ENCODE measurements at regions of chr1 and their contacts with region 1.

Region 1: DNA sequence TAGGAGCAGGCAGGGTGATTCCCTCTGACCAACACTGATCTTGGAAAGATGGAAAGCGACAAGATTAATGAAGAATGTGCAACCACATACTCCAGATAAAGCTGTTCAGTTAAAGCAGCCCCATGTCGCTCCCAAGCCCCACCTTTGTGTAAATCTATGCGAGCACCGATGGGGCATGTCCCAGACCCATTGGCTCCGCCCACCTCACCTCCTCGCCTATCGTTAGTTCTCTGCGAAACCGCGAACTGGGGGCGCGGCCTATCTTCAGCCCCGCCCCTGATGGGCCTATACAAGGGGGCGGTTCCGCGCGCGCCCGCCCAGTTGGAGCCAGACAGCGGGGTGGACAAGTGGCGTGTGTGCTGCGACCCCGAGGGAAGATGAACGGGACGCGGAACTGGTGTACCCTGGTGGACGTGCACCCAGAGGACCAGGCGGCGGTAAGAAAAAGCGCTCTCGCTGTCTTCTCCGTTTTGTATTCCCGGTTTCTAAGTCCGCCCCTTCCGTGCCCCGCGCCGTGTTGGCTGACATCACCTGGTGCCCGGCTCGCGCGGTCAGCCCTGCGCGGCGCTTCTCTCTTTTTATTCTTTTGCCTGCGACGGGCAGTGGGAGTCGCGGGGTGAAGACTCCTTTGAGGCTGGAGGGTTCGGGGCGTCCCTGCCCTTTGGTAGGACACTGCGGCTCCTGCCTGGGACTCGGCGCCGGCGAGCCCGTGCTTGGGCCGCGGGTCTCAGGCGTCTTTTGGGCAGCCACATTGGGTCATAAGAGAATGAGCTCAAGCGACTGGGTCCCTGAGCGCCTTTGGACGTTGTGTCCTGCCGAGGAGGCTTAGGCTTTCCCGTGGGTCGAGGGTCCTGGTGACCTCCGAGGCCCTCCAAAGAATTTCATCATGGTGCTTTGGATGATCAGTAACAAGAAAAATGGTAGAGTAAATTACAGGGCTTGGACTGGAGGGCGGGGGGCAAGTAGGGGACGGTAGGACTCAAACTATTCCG is at the start of gene TUFT1:
- DNase-seq: peak; percentile 81 to 96
- H3K4me3 ChIP-seq: peak within 1 kb of the TSS; percentile 65 to 95 (median 82)
- H3K27ac ChIP-seq: peak within 1 kb of the TSS; percentile 78
- H3K4me1 ChIP-seq: peaks cover 0 to 7% (median 6%) of the 10 kb centered on the region in 4 experiments; a peak in 6 of 7 replicates
- H3K27me3 ChIP-seq: no peaks in the 10 kb centered on the region
- CTCF ChIP-seq: no peak
- EP300 ChIP-seq: no peak
- POLR2A ChIP-seq: peak; percentile 92 to 98
- RAD21 ChIP-seq: no peak
- total RNA-seq, gene TUFT1: 10.1 and 10.4 TPM in 2 replicates

Region 2: DNA sequence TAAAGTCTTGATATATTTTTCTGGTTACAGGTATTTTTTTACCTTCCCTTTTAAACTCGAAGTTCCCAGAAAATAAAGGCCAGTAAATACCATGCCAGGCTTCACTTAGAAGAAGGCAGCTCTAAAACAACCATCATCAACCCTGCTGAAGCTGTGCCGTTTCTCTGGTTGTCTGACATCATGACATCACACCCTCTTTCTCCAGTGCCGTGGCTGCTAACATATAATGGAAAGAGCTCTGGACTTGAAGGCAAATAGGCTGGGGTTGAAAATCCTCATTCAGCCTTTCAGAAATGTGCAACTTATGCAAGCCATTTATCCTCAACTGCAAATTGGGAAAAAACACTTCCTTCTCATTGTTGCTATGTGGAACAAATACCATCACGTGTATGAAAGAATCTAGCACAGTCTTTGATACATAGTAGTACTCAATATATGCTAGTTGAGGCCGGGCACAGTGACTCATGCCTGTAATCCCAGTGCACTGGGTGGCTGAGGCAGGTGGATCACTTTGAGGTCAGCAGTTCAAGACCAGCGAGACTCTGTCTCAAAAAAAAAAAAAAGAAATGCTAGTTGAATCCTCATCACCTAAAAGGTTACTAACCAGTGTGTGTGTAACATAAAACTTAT is 221.4 kb before region 1 on chr1:
- CTCF ChIA-PET with region 1: no interaction called
- POLR2A ChIA-PET with region 1: no interaction called
- DNase-seq: no peak
- H3K4me3 ChIP-seq: no peak overlapping the region
- H3K27ac ChIP-seq: no peak overlapping the region
- H3K4me1 ChIP-seq: no peaks in the 10 kb centered on the region
- H3K27me3 ChIP-seq: no peaks in the 10 kb centered on the region
- CTCF ChIP-seq: no peak
- EP300 ChIP-seq: no peak
- POLR2A ChIP-seq: no peak
- RAD21 ChIP-seq: no peak

Region 3: DNA sequence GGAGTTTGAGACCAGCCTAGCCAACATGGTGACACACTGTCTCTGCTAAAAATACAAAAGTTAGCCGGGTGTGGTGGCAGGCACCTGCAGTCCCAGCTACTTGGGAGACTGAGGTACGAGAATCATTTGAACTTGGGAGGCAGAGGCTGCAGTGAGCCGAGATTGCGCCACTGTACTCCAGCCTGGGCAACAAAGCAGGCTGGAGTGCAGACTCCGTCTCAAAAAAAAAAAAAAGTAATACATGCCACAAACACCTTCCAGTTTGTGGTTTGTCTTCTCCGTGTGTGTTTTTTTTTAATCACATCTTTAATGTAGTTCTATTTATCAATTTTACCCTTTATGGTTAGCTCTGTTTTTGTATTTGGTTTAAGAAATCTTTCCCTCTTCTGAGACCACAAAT is 103.3 kb before region 1 on chr1:
- CTCF ChIA-PET with region 1: no interaction called
- POLR2A ChIA-PET with region 1: no interaction called
- DNase-seq: no peak
- H3K4me3 ChIP-seq: no peak overlapping the region
- H3K27ac ChIP-seq: no peak overlapping the region
- H3K4me1 ChIP-seq: no peaks in the 10 kb centered on the region
- H3K27me3 ChIP-seq: no peaks in the 10 kb centered on the region
- CTCF ChIP-seq: no peak
- EP300 ChIP-seq: no peak
- POLR2A ChIP-seq: no peak
- RAD21 ChIP-seq: no peak

Region 4: DNA sequence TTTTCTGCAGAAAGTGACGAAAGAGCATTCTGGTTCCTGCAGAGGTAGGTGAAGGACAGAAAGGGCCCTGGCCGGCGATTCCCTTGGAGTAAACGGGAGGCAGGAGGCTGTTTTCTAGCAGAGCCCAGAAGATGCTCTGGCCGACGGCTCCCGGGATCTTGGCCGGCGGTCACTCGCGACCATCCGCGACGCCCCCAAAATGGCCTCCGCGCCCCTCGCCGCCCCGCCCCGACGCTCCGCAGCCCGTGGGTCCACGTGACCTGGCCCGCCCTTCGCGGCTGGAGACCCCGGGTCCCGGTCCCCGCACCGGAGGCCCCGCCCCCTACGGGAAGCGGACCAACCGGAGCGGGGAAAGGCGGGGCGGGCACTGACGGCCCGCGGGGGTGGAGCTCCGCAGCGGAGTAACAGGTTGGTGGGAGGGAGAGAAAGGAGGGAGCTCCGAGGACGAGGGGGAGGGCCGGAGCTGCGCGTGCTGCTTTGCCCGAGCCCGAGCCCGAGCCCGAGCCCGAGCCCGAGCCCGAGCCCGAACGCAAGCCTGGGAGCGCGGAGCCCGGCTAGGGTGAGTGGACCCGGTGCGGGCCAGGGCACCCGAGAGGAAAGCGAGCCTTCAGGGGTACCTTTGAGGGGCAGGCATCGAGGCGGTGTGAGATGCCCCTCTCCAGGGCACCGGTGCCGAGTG is 29.2 kb before region 1 on chr1 and contains the start of gene CGN:
- CTCF ChIA-PET with region 1: interaction called, 3 read pairs
- POLR2A ChIA-PET with region 1: interaction called, 283 read pairs
- DNase-seq: peak; percentile 88 to 93
- H3K4me3 ChIP-seq: peak within 1 kb of the TSS; percentile 80 to 85 (median 84)
- H3K27ac ChIP-seq: peak within 1 kb of the TSS; percentile 90
- H3K4me1 ChIP-seq: peaks cover 19 to 33% (median 21%) of the 10 kb centered on the region in 4 experiments
- H3K27me3 ChIP-seq: 0 out of 7 replicates have a peak, but pooled peaks cover 0 to 3% (median 0%) of the 10 kb centered on the region in 4 experiments
- CTCF ChIP-seq: no peak
- EP300 ChIP-seq: no peak
- POLR2A ChIP-seq: peak; percentile 82 to 85
- RAD21 ChIP-seq: no peak
- total RNA-seq, gene CGN: 52.7 and 54.6 TPM in 2 replicates

Region 5: DNA sequence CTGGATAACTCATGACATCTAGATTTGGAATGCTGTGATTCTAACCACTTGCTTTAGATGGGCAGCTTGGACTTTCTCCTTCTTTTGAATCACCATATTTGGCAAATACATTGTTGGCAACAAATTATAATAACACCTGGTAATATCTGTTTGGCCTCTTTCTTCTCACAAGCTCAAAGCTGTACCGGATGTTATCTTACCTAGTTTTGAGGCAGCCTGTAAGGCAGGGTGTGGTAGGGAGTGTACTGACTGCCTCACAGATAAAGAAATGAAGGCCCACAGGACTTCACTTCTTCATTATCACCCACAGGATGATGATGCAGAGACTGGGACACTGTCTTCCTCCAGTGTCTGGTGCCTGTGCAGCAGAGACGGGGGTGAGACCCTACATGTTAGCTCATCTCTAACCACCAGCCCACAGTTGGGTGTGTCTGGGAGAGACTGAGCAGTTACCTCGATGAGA is 28.4 kb after region 1 on chr1:
- CTCF ChIA-PET with region 1: interaction called, 5 read pairs
- POLR2A ChIA-PET with region 1: interaction called, 32 read pairs
- DNase-seq: no peak
- H3K4me3 ChIP-seq: no peak overlapping the region
- H3K27ac ChIP-seq: no peak overlapping the region
- H3K4me1 ChIP-seq: no peaks in the 10 kb centered on the region
- H3K27me3 ChIP-seq: no peaks in the 10 kb centered on the region
- CTCF ChIP-seq: no peak
- EP300 ChIP-seq: no peak
- POLR2A ChIP-seq: no peak
- RAD21 ChIP-seq: no peak

Region 6: GRCh38 chr1:151594143-151594625 is 53.9 kb after region 1 on chr1:
- CTCF ChIA-PET with region 1: interaction called, 8 read pairs
- POLR2A ChIA-PET with region 1: interaction called, 20 read pairs
- DNase-seq: peak; percentile 80 to 92
- H3K4me3 ChIP-seq: peak overlapping the region; percentile 26 to 68 (median 44); a peak in 7 of 8 replicates
- H3K27ac ChIP-seq: no peak overlapping the region
- H3K4me1 ChIP-seq: peaks cover 0 to 2% (median 0%) of the 10 kb centered on the region in 4 experiments; a peak in 1 of 7 replicates
- H3K27me3 ChIP-seq: no peaks in the 10 kb centered on the region; a peak in 1 of 7 replicates
- CTCF ChIP-seq: peak; percentile 85 to 96 (median 95)
- EP300 ChIP-seq: no peak
- POLR2A ChIP-seq: no peak
- RAD21 ChIP-seq: peak; percentile 78 to 86

Region 7: DNA sequence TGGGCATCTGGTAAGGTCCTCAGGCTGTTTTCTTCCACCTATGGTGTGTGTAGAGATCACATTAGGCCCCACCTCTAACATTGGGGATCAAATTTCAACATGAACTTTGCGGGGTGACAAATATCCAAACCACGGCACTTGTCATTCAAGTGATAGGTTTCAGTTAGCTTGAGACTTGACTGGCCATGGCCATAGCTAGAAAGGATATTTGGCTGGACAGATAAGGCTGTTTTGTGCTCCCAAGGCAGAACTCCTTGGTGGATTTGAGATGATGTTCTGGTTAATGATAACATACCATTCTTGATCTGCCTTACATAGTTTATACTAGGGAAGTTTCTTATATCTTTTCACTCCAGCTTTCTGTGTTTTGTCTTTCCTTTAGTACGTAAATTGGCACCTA is 127.8 kb after region 1 on chr1:
- CTCF ChIA-PET with region 1: no interaction called
- POLR2A ChIA-PET with region 1: no interaction called
- DNase-seq: no peak
- H3K4me3 ChIP-seq: no peak overlapping the region
- H3K27ac ChIP-seq: no peak overlapping the region
- H3K4me1 ChIP-seq: no peaks in the 10 kb centered on the region
- H3K27me3 ChIP-seq: no peaks in the 10 kb centered on the region
- CTCF ChIP-seq: no peak
- EP300 ChIP-seq: no peak
- POLR2A ChIP-seq: no peak
- RAD21 ChIP-seq: no peak

Region 8: GRCh38 chr1:151762941-151763921 is 222.9 kb after region 1 on chr1 and contains the start of gene MRPL9:
- CTCF ChIA-PET with region 1: interaction called, 4 read pairs
- POLR2A ChIA-PET with region 1: interaction called, 11 read pairs
- DNase-seq: peak; percentile 36 to 91
- H3K4me3 ChIP-seq: peak within 1 kb of the TSS; percentile 88 to 96 (median 92)
- H3K27ac ChIP-seq: peak within 1 kb of the TSS; percentile 85
- H3K4me1 ChIP-seq: 0 out of 7 replicates have a peak, but pooled peaks cover 0 to 1% (median 0%) of the 10 kb centered on the region in 4 experiments
- H3K27me3 ChIP-seq: no peaks in the 10 kb centered on the region
- CTCF ChIP-seq: no peak
- EP300 ChIP-seq: no peak
- POLR2A ChIP-seq: peak; percentile 88 to 92
- RAD21 ChIP-seq: no peak; a peak in 1 of 4 replicates
- total RNA-seq, gene MRPL9: 96.4 and 113 TPM in 2 replicates